BJ (cell line): ENCODE measurements at regions of chr16 and their contacts with region 1.

Region 1: GRCh38 chr16:48478396-48478795 is 93.2 kb upstream of the SIAH1 start:
- DNase-seq: no peak
- H3K4me3 ChIP-seq: no peak overlapping the region
- H3K27me3 ChIP-seq: 0 out of 2 replicates have a peak, but pooled peaks cover 1% of the 10 kb centered on the region
- CTCF ChIP-seq: no peak

Region 2: DNA sequence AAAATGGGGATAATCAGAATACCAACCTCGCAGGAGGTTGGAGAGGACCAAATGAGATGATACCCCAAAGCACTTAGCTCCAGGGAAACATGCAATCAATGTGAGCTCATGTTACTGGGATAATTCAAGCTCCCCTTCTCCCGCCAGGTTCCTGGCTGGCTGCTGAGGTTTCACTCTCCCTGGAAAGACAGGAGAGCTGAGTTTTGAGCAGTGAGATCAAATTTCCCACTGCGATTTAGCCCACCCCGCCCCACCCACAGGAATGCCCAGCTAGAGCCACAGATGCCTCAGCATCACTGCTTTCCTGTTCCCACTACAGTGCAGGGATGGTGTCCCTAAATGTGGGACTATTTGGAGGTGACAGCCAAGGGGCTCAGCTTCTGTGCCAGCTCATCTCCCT is 1320.8 kb after region 1 on chr16:
- CTCF ChIA-PET with region 1: no interaction called
- POLR2A ChIA-PET with region 1: interaction called, 11 read pairs
- DNase-seq: no peak
- H3K4me3 ChIP-seq: no peak overlapping the region
- H3K27me3 ChIP-seq: no peaks in the 10 kb centered on the region
- CTCF ChIP-seq: no peak